ENCODE measurements at regions of chr15 and their contacts with region 1.

Region 1: GRCh38 chr15:89367485-89368451 is 33.1 kb upstream of the POLG start:
- DNase-seq: peak; percentile 93
- H3K27ac ChIP-seq: no peak overlapping the region
- CTCF ChIP-seq: no peak

Region 2: DNA sequence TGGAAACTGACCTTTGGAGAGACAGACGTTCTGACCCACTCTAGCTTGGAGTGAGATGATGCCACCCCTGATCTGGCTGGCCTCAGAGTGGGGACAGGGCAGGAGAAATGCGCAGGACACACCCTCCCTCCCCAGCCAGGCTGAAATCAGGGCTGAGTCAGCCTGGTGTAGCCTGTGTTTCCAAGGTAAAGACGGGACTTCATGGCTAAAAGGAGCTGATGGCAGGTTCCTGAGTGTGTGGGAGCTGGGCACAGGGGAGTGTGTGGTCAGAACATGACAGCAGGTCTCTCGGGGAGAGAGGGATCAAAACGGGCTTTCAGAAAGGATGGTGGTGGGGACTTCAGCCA is 18.6 kb before region 1 on chr15:
- CTCF ChIA-PET with region 1: no interaction called
- POLR2A ChIA-PET with region 1: no interaction called
- DNase-seq: no peak
- H3K27ac ChIP-seq: no peak overlapping the region
- CTCF ChIP-seq: no peak

Region 3: GRCh38 chr15:89378296-89379151 is 10.8 kb after region 1 on chr15:
- CTCF ChIA-PET with region 1: interaction called, 3 read pairs
- POLR2A ChIA-PET with region 1: interaction called, 10 read pairs
- DNase-seq: peak; percentile 70
- H3K27ac ChIP-seq: no peak overlapping the region
- CTCF ChIP-seq: no peak

Region 4: DNA sequence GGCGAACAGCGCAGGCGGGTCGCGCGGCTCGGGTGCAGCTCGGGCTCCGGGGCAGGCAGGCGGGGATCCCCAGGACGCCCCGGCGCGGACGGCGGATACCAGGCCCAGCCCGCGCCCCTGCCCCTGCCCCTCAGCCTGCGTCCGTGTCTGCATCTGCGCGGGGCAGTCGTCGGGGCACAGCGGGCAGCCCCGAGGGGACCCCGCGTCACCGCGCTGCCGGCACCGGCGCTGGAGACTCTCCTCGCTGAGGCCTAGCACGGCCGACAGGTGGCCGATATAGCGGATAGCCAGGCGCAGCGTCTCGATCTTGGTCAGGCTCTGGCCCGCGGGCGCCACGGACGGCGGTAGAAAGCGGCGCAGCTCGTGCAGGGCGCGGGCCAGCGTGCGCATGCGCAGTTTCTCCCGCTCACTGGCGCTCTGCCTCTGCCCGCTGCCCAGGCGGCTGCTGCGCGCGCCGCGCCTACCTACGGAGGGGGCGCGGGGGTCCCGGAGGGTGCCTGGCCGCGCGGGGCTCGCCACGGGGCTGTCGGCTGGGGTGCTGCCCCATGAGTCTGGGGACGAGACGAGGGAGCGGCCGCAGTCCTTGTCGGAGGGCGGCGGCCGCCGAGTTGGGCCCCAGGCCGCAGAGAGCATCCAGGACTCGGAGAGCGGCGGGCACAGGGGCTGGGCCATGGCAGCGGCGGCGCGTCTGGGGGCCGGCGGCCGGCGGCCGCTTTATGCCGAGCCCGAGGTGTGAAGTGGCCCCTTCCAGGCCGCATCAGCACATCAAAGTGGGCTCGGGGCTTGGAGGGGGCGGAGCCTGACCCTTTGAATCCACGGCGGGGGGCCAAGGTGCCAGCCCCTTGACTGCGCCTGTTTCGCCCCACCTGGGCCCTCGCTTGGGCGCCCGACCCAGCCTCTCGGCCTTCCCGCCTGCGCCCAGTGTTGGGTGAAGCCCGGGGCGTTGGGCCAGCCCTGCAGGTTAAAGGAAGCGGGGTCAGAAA is 383.1 kb after region 1 on chr15 and contains the start of gene MESP1:
- CTCF ChIA-PET with region 1: no interaction called
- POLR2A ChIA-PET with region 1: no interaction called
- DNase-seq: peak; percentile 94
- H3K27ac ChIP-seq: peak within 1 kb of the TSS; percentile 69
- CTCF ChIP-seq: peak; percentile 88

Measured in RWPE1 (cell line).